K562 (cell line): ENCODE measurements at regions of chr19 and their contacts with region 1.

Region 1: DNA sequence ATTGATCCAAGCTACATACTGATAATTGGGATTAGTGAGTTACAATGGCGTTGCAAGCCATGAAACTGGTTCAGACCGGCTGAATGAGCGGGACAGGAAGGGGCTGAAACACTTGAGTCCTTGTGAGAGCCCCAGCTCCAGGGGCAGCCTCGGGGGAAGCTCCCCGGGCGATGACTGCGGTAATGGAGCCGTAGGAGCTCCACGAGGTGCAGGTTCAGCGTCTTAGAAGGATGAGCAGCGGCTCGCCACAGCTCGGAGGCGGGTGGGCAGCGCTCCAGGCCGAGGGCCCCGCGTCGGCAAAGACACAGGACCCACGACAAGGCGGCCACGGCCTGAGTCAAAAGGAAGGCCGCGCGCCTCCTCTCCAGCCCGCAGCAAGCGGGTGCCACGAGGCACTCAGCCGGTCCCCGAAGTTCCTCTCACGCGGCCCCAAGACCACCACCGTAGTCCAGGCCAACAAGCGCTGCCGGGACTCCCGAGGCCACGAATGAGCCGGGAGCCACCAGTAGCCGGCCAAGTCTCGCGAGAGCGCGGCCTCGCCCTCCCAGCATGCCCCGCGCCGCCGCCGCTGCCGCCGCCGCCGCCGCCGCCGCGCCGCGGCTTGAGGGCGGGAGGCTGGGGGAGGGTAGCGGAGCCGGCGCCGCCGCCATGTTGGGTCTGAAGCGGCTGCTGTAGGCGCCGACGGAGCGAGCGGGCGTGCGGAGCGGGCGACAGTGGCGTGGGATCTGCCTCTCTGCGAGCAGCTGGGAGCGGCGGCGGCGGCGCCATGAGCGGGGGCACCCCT is at the start of gene LSM14A:
- DNase-seq: peak; percentile 92 to 95 (median 94)
- ATAC-seq: peak; percentile 82
- H3K4me3 ChIP-seq: peak within 1 kb of the TSS; percentile 96
- H3K27ac ChIP-seq: peak within 1 kb of the TSS; percentile 91
- H3K4me1 ChIP-seq: peaks cover 21 to 23% of the 10 kb centered on the region in 2 experiments
- H3K27me3 ChIP-seq: no peaks in the 10 kb centered on the region
- CTCF ChIP-seq: no peak
- EP300 ChIP-seq: no peak
- POLR2A ChIP-seq: peak; percentile 97
- RAD21 ChIP-seq: no peak
- polyA plus RNA-seq, gene LSM14A: 19.5 to 25.7 TPM

Region 2: DNA sequence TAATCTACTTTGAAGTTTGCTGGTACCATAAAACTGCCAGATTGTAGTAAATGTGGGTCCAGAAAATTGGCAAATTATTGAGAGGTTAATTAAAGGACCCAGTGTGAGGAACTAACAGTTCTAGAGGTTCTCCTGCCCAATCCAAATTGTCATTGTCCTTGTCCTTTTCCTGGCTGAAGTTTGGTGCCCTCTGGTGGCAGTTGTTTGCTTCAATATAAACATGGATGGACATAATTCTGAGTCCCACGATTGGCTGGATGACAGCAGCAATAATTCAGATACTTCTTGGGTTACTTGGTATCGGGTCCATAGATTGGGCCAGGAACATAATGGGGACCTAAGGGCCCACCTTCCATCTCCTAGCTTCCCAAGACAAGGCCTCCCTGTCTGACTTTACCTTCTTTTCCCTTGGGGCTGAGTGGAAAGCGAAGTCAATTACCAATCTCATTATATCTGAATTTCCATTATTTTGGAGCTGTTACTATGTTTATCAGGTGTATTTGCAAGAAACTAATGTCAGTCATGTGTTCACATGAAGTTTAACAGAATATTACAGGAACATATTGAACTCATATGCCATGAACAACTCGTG is 48.5 kb after region 1 on chr19:
- CTCF ChIA-PET with region 1: no interaction called
- POLR2A ChIA-PET with region 1: interaction called, 4 read pairs
- in situ Hi-C with region 1: no loop called
- intact Hi-C with region 1: loop called (anchors 5 kb)
- DNase-seq: peak; percentile 52 to 84 (median 68)
- ATAC-seq: peak; percentile 78
- H3K4me3 ChIP-seq: no peak overlapping the region
- H3K27ac ChIP-seq: no peak overlapping the region
- H3K4me1 ChIP-seq: peaks cover 9 to 18% of the 10 kb centered on the region in 2 experiments
- H3K27me3 ChIP-seq: no peaks in the 10 kb centered on the region
- CTCF ChIP-seq: peak; percentile 68 to 75 (median 70)
- EP300 ChIP-seq: no peak
- POLR2A ChIP-seq: no peak
- RAD21 ChIP-seq: peak in 1 of 2 experiments; percentile 71; a peak in 3 of 4 replicates

Region 3: DNA sequence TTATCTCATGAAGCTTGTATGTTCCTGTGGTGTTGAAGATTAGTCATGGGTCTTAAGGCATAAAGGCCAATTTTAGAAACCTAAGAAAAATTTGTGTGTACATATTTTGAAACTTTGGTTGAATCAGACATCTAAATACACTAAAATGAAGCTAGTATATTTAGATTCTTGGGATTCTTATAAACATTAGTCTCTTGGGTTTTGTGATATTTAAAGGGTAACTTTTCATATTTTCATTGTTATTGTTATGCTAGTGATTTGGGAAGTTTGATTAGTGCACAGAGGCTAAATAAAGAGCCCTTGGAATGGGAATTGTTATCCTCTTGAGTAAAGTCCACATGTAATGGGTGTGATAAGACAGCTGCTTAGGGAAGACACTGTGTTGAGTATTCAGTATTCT is 280.7 kb after region 1 on chr19:
- CTCF ChIA-PET with region 1: no interaction called
- POLR2A ChIA-PET with region 1: no interaction called
- in situ Hi-C with region 1: no loop called
- intact Hi-C with region 1: no loop called
- DNase-seq: no peak
- ATAC-seq: no peak
- H3K4me3 ChIP-seq: no peak overlapping the region
- H3K27ac ChIP-seq: no peak overlapping the region
- H3K4me1 ChIP-seq: no peaks in the 10 kb centered on the region
- H3K27me3 ChIP-seq: no peaks in the 10 kb centered on the region
- CTCF ChIP-seq: no peak
- EP300 ChIP-seq: no peak
- POLR2A ChIP-seq: no peak
- RAD21 ChIP-seq: no peak

Region 4: GRCh38 chr19:34597997-34598856 is 426.2 kb after region 1 on chr19:
- CTCF ChIA-PET with region 1: no interaction called
- POLR2A ChIA-PET with region 1: no interaction called
- in situ Hi-C with region 1: no loop called
- intact Hi-C with region 1: no loop called
- DNase-seq: no peak
- ATAC-seq: no peak
- H3K4me3 ChIP-seq: no peak overlapping the region
- H3K27ac ChIP-seq: no peak overlapping the region
- H3K4me1 ChIP-seq: no peaks in the 10 kb centered on the region; a peak in 1 of 5 replicates
- H3K27me3 ChIP-seq: peaks cover 4 to 29% of the 10 kb centered on the region in 2 experiments; a peak in 4 of 5 replicates
- CTCF ChIP-seq: no peak
- EP300 ChIP-seq: no peak
- POLR2A ChIP-seq: no peak
- RAD21 ChIP-seq: no peak